Colonic mucosa (tissue), 4 donors: ENCODE measurements at regions of chr5 and their contacts with region 1.

Region 1: DNA sequence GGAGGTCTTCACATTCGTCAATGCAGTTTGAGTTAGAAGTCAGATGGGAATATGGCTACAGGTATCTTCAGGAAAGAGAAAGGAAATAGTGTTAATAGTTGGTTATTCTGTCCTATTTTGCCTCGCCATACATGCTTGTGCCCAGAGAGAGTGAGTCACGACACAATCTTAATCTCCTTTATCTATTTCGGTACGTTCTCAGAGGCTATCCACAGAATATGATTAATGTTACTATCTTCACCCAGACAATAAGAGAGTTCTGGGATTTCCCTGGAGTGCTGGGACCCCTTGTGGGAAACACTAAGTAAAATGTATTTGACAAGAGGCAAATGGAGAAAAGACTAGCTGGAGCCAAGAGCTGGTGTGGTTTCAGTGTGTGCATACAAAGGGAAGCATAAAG is 25.5 kb downstream of the MINAR2 start:
- DNase-seq: no peak
- H3K4me3 ChIP-seq: no peak overlapping the region
- H3K27ac ChIP-seq: no peak overlapping the region
- H3K4me1 ChIP-seq: no peaks in the 10 kb centered on the region
- H3K27me3 ChIP-seq: no peaks in the 10 kb centered on the region
- CTCF ChIP-seq: no peak

Region 2: DNA sequence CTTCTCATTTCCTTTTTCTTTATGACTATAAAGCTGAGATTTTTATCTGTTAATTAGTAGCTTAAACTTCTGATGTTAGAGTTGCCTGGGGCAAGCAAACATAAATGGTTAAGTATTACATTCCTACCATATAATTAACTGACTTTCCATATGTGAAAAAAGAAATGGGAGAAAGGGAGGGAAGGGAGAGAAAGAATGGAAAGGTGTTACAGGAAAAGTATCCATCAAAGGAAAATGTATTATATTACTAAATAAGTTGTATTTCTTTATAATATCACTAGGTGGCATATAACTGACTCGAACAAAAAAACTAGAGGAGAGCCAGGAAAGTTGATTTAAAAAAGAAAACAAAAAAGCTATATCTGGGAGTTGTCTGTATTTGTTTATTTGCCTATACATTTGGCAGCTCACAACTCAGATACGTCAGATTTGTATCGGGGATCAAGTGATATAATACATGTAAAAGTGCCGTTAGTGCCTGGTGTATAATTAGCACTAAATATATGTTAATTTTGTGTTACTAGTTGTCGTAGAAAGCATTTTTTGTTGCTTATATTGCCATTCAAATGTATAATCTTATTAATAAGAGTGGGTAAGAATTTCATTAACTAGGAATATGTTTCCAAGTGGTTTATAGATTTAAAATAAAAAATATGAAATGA is 372.9 kb before region 1 on chr5:
- intact Hi-C with region 1: no loop called
- DNase-seq: no peak
- H3K4me3 ChIP-seq: no peak overlapping the region
- H3K27ac ChIP-seq: no peak overlapping the region
- H3K4me1 ChIP-seq: no peaks in the 10 kb centered on the region
- H3K27me3 ChIP-seq: no peaks in the 10 kb centered on the region
- CTCF ChIP-seq: no peak

Region 3: GRCh38 chr5:129821477-129822131 is 48.2 kb after region 1 on chr5:
- intact Hi-C with region 1: no loop called
- DNase-seq: no peak
- H3K4me3 ChIP-seq: no peak overlapping the region
- H3K27ac ChIP-seq: no peak overlapping the region
- H3K4me1 ChIP-seq: no peaks in the 10 kb centered on the region
- H3K27me3 ChIP-seq: no peaks in the 10 kb centered on the region
- CTCF ChIP-seq: no peak

Region 4: DNA sequence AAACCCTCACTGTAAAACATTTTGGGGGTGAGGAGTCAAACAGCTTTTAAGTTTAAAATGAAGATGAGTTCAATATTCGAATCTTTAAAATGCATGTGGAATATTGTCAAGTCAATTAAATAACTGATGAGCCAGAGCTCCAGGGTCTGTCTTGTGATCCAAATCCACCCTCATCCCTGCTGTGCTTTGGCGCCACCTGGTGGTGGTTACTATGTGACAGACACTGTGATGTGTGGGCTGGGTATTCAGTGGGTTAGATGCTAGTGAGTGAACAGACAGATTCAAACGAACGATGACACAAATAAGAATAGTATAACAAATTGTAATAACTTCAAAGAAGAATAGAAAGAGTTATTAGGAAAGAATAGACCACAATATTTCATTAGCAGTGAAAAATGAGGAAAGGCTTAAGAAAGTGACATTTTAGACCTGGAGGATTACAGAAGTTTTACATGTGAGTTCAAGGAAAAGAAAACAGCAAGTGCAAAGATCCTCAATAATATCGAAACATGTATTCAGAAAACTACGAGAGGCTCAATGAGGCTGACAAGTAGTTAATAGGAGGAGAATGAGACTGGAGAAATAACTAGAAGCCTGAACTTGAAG is 79.5 kb after region 1 on chr5:
- intact Hi-C with region 1: loop called (anchors 2 kb)
- DNase-seq: peak; percentile 76
- H3K4me3 ChIP-seq: no peak overlapping the region
- H3K27ac ChIP-seq: no peak overlapping the region
- H3K4me1 ChIP-seq: no peaks in the 10 kb centered on the region
- H3K27me3 ChIP-seq: no peaks in the 10 kb centered on the region
- CTCF ChIP-seq: peak; percentile 88